Left cardiac atrium (tissue), 4 donors: ENCODE measurements at regions of chr16 and their contacts with region 1.

Region 1: GRCh38 chr16:3712861-3713372 is 4.4 kb downstream of the TRAP1 start:
- DNase-seq: no peak
- ATAC-seq: no peak

Region 2: GRCh38 chr16:3536271-3536731 is 176.6 kb before region 1 on chr16:
- intact Hi-C with region 1: no loop called
- DNase-seq: no peak
- ATAC-seq: no peak

Region 3: DNA sequence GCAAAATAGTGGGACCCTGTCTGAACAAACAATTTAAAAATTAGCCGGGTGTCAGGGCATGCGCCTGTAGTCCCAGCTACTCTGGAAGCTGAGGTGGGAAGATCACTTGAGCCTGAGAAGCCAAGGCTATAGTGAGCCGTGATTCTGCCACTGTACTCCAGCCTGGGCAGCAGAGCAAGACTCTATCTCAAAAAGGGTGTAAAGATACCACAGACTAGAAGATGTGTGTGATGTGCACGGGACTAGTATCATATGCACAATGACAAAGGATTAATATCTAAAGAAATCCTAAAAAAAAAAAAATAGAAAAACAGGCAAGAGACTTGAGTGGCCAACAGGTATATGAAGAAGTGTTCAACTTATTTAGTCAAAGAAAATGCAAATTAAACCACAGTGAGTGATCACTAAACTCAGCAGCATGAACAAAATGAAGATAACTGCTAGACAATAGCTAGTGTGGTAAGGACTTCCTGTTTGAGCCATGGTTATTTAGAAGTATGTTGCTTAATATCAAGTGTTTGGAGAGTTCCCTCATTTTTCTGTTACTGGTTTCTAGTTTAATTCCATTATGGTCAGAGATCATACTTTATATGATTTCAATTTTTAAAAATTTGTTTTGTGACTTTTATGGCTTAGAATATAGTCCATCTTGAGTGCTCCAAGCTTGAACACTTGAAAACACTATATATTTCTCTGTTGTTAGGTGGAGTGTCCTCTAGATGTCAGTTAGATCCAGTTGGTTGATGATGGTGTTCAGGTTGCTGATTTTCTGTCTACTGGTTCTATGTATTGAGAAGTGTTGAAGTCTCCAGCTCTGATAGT is 86.8 kb before region 1 on chr16:
- intact Hi-C with region 1: no loop called
- DNase-seq: no peak
- ATAC-seq: no peak

Region 4: DNA sequence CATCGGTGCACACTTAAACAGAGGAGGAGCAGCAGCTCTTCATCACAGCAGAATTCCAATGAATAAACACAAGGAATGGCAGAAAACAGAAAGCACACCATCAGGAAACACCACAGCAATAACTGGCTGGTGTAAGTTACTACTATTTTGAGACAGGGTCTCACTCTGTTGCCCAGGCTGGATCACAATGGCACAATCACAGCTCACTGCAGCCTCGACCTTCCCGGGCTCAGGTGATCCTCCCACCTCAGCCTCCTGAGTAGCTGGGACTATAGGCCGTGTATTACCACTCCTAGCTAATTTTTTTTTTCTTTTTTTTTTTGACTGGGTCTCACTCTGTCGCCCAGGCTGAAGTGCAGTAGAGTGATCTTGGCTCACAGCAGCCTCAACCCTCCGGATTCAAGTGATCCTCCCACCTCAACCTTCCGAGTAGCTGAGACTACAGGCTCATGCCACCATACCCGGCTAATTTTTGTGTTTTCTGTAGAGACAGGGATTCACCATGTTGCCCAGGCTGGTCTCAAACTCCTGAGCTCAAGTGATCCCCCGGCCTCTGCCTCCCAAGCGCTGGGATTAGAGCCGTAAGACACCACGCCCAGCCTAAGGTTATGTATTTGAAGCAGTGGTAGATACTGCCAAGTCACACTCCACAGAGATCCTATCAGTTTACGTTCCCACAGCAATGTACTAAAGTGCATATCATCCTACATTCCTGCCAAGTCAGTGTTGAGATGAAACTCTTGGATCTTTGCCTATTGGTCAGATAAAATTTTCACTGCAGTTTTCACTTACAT is 16.3 kb before region 1 on chr16:
- intact Hi-C with region 1: loop called in 1 of 2 experiments (anchors 1 kb)
- DNase-seq: no peak
- ATAC-seq: peak; percentile 80 to 95